Activated T-helper 2 cell treated with anti-CD3 and anti-CD28 coated beads, Interferon-gamma antibody, Interleukin-2, Interleukin-4, amounts not matched to agents 10 μg/mL and 5 μg/mL and 100 μg/mL, durations not matched to agents 14 hours and 24 hours and 36 hours (primary cell): ENCODE measurements at regions of chr20 and their contacts with region 1.

Region 1: DNA sequence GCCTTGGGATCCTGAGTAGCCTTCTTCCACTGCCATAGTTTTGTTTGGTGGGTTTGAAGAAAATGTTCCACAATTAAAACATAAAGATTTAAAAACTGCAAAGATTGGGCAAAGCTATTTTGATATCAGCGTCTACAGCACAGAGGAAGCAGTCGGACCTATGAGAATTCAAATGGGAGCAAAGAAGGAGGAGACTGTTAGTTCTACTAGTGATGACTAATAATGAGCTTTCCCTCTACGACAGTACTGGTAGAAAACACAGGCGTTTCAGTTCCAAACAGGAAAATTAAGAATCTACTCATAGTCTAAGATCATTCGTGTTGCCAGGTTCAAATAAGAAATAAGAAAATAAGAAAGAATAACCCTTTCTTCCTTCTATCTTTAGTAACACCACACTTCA is 121.2 kb downstream of the INSM1 start:
- DNase-seq: no peak
- H3K4me3 Mint-ChIP-seq: peak overlapping the region; percentile 79
- H3K27ac Mint-ChIP-seq: peak overlapping the region; percentile 97
- H3K4me1 Mint-ChIP-seq: peaks cover 57% of the 10 kb centered on the region
- H3K27me3 Mint-ChIP-seq: no peaks in the 10 kb centered on the region

Region 2: GRCh38 chr20:19947611-19948264 is 541.3 kb before region 1 on chr20:
- intact Hi-C with region 1: loop called (anchors 10 kb)
- DNase-seq: no peak
- H3K4me3 Mint-ChIP-seq: no peak overlapping the region
- H3K27ac Mint-ChIP-seq: no peak overlapping the region
- H3K4me1 Mint-ChIP-seq: peaks cover 22% of the 10 kb centered on the region
- H3K27me3 Mint-ChIP-seq: peaks cover 9% of the 10 kb centered on the region

Region 3: GRCh38 chr20:20233041-20233514 is 256.0 kb before region 1 on chr20:
- intact Hi-C with region 1: no loop called
- DNase-seq: no peak
- H3K4me3 Mint-ChIP-seq: no peak overlapping the region
- H3K27ac Mint-ChIP-seq: no peak overlapping the region
- H3K4me1 Mint-ChIP-seq: no peaks in the 10 kb centered on the region
- H3K27me3 Mint-ChIP-seq: peaks cover 3% of the 10 kb centered on the region

Region 4: DNA sequence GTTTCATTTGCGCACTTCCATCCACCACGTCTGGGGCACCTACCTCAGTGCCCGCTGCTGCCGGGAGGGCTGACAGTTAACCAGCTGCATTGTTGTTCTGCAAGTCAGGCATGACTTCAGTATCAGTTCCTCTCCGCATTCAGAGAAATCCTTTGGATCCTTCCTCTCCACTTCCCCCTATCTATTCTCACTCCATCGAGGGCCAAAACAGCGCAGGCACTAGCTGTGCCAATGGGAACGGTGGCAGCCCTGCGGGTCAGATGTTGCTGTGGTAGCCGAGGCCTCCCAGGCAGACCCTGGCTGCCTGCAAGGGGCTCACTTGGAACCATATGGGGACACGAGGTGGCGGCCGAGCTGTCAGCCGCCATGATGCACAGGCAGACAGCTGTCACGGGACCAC is 185.3 kb before region 1 on chr20:
- intact Hi-C with region 1: no loop called
- DNase-seq: no peak
- H3K4me3 Mint-ChIP-seq: no peak overlapping the region
- H3K27ac Mint-ChIP-seq: no peak overlapping the region
- H3K4me1 Mint-ChIP-seq: no peaks in the 10 kb centered on the region
- H3K27me3 Mint-ChIP-seq: no peaks in the 10 kb centered on the region

Region 5: DNA sequence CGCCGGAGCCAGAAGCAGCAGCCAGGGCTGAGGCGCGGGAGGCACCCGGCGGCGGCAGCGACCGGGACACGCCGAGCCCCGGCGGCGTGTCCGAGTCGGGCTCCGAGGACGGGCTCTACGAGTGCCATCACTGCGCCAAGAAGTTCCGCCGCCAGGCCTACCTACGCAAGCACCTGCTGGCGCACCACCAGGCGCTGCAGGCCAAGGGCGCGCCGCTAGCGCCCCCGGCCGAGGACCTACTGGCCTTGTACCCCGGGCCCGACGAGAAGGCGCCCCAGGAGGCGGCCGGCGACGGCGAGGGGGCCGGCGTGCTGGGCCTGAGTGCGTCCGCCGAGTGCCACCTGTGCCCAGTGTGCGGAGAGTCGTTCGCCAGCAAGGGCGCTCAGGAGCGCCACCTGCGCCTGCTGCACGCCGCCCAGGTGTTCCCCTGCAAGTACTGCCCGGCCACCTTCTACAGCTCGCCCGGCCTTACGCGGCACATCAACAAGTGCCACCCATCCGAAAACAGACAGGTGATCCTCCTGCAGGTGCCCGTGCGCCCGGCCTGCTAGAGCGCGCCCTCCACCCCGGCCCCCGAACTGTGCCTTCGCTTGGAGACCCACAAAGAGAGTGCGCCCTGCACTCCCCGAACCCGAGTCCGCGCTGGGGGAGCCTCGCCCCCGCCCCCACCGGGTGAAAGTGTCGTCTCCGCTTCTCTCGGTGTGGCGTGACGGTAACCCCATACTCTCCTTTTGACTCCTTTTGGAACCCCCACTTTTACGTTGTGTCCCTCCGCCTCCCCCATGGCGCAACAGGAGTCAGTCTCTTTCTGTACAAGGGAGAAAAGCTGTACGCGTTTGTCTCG is 119.6 kb before region 1 on chr20:
- intact Hi-C with region 1: loop called (anchors 2 kb)
- DNase-seq: no peak
- H3K4me3 Mint-ChIP-seq: peak overlapping the region; percentile 84
- H3K27ac Mint-ChIP-seq: peak overlapping the region; percentile 56
- H3K4me1 Mint-ChIP-seq: peaks cover 25% of the 10 kb centered on the region
- H3K27me3 Mint-ChIP-seq: peaks cover 51% of the 10 kb centered on the region

Region 6: GRCh38 chr20:20425823-20426654 is 63.0 kb before region 1 on chr20:
- intact Hi-C with region 1: loop called (anchors 2 kb)
- DNase-seq: no peak
- H3K4me3 Mint-ChIP-seq: no peak overlapping the region
- H3K27ac Mint-ChIP-seq: peak overlapping the region; percentile 87
- H3K4me1 Mint-ChIP-seq: peaks cover 47% of the 10 kb centered on the region
- H3K27me3 Mint-ChIP-seq: no peaks in the 10 kb centered on the region

Region 7: DNA sequence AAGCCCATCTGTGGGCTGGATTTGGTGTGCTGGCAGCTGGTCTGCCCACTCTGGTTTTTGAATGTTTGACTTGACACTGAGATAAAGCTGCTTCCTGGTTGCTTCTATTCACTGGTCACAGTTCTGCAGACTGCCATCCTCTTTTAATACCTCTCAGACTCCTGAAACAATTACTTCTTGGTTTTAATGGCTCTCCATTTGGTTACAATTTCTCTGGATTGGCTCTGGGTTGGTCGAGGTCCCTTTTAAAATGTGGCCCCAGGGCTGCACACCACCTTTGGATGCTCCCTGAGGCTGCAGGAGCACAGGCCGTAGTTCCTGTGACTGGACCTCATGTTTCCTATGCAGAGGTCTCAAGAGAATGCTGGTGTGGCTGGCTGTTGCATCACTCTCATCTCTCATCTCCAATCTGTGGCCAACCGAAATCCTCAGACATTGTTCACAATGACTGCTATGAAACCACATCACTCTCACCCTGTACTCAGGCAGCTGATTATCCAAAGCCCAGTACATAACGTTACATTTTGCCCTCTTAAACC is 22.6 kb before region 1 on chr20:
- intact Hi-C with region 1: loop called (anchors 2 kb)
- DNase-seq: no peak
- H3K4me3 Mint-ChIP-seq: no peak overlapping the region
- H3K27ac Mint-ChIP-seq: peak overlapping the region; percentile 73
- H3K4me1 Mint-ChIP-seq: peaks cover 34% of the 10 kb centered on the region
- H3K27me3 Mint-ChIP-seq: peaks cover 2% of the 10 kb centered on the region

Region 8: DNA sequence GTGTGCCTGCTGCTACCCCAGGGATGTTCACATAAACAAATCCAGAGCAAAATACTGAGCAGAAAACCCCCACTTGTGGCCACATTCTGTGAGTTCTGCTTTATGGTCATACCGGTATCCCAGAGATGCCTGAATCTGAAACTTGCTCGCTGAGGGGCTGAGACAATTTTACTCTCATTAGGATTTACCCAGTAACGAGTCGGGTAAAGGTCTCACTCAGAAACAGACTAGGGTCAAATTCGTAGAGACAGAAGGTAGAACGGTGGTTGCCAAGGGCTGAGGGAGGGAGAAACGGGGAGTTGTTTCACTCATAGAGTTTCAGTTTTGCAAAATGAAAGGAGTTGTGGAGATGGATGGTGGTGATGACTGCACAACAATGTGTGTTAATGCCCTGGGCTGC is 1070.3 kb after region 1 on chr20:
- intact Hi-C with region 1: loop called (anchors 5 kb)
- DNase-seq: peak; percentile 15
- H3K4me3 Mint-ChIP-seq: no peak overlapping the region
- H3K27ac Mint-ChIP-seq: no peak overlapping the region
- H3K4me1 Mint-ChIP-seq: peaks cover 33% of the 10 kb centered on the region
- H3K27me3 Mint-ChIP-seq: peaks cover 9% of the 10 kb centered on the region